MCF 10A (cell line): ENCODE measurements at regions of chr3 and their contacts with region 1.

Region 1: GRCh38 chr3:197599089-197599765 is 43.5 kb upstream of the BDH1 start:
- DNase-seq: peak; percentile 76
- H3K4me3 Mint-ChIP-seq: peak overlapping the region; percentile 23
- H3K27ac Mint-ChIP-seq: no peak overlapping the region
- H3K4me1 Mint-ChIP-seq: no peaks in the 10 kb centered on the region
- H3K27me3 Mint-ChIP-seq: peaks cover 10% of the 10 kb centered on the region
- CTCF ChIP-seq: peak; percentile 90

Region 2: GRCh38 chr3:197577366-197578074 is 21.7 kb before region 1 on chr3:
- CTCF ChIA-PET with region 1: interaction called, 12 read pairs
- POLR2A ChIA-PET with region 1: interaction called, 5 read pairs
- intact Hi-C with region 1: no loop called
- DNase-seq: no peak
- H3K4me3 Mint-ChIP-seq: no peak overlapping the region
- H3K27ac Mint-ChIP-seq: no peak overlapping the region
- H3K4me1 Mint-ChIP-seq: no peaks in the 10 kb centered on the region
- H3K27me3 Mint-ChIP-seq: no peaks in the 10 kb centered on the region
- CTCF ChIP-seq: no peak

Region 3: DNA sequence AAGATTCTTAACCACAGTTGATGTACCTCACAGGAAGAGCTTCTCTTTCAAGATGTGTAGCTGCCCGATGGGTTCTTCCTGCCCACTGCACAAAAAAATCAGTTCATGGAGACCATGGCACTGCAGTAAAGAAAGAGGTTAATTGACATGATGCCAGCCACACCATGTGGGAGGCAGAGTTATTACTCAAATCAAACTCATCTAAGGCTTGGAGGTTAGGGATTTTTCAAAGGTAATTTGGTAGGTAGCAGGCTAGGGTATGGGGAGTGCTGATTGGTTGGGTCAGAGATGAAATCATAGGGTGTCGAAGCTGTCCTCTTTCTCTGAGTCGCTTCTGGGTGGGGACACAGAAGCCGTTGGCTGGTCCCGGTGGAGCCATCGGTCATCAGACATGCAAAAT is 14.0 kb after region 1 on chr3:
- CTCF ChIA-PET with region 1: interaction called, 29 read pairs
- POLR2A ChIA-PET with region 1: interaction called, 17 read pairs
- intact Hi-C with region 1: no loop called
- DNase-seq: no peak
- H3K4me3 Mint-ChIP-seq: no peak overlapping the region
- H3K27ac Mint-ChIP-seq: no peak overlapping the region
- H3K4me1 Mint-ChIP-seq: no peaks in the 10 kb centered on the region
- H3K27me3 Mint-ChIP-seq: no peaks in the 10 kb centered on the region
- CTCF ChIP-seq: no peak

Region 4: DNA sequence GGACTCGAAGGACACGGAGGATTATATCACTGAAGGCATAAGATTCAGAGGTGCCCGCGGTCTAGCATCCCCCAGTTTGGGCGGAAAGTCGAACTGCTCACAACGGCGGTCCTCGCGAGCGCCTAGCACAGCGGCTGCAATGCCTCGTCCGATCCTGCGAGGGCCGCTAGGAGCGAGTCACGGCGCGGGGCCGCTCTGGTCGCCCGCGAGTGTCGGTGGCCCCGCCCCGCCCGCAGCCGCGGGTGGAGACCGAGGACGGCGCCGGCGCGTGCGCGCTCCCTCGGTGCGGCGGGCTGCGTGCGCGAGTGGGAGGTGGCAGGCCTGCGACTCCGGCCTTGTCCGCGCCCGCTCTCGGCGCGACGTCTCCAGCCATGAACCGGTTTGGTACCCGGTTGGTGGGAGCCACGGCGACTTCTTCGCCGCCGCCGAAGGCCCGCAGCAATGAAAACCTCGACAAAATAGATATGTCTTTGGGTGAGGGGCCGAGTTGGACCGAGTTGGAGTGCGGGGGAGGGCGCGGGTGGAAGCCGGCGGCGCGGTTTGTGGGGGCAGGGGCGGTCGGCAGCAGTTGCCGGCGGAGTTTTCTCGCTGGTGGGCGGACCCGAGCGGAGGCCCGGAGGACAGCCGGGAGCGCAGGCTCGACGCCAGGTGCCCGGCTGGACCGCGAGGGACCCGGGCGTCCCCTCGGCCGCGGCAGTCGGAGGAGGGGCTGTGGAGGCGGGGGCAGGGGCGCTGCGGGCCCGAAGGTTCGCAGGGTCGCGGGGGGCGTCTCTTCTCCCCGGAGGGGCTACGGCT is 150.6 kb after region 1 on chr3 and contains the start of gene FYTTD1:
- CTCF ChIA-PET with region 1: no interaction called
- POLR2A ChIA-PET with region 1: no interaction called
- intact Hi-C with region 1: no loop called
- DNase-seq: peak; percentile 77
- H3K4me3 Mint-ChIP-seq: peak within 1 kb of the TSS; percentile 98
- H3K27ac Mint-ChIP-seq: peak within 1 kb of the TSS; percentile 97
- H3K4me1 Mint-ChIP-seq: peaks cover 27% of the 10 kb centered on the region
- H3K27me3 Mint-ChIP-seq: no peaks in the 10 kb centered on the region
- CTCF ChIP-seq: peak; percentile 16
- total RNA-seq, gene FYTTD1: 45.9 and 46.3 TPM in 2 replicates